Ovary (tissue), 10 donors: ENCODE measurements at regions of chr14 and their contacts with region 1.

Region 1: GRCh38 chr14:95534299-95535225 is at the start of gene GLRX5:
- DNase-seq: peak; percentile 97 to 99 (median 98)
- H3K4me3 ChIP-seq: peak within 1 kb of the TSS; percentile 85
- H3K27ac ChIP-seq: peak within 1 kb of the TSS; percentile 64 to 71
- H3K4me1 ChIP-seq: peaks cover 23% of the 10 kb centered on the region
- H3K27me3 ChIP-seq: no peaks in the 10 kb centered on the region
- CTCF ChIP-seq: no peak
- EP300 ChIP-seq: no peak
- POLR2A ChIP-seq: peak; percentile 57
- total RNA-seq, gene GLRX5: 38.0 to 49.2 (median 41.7) TPM

Region 2: DNA sequence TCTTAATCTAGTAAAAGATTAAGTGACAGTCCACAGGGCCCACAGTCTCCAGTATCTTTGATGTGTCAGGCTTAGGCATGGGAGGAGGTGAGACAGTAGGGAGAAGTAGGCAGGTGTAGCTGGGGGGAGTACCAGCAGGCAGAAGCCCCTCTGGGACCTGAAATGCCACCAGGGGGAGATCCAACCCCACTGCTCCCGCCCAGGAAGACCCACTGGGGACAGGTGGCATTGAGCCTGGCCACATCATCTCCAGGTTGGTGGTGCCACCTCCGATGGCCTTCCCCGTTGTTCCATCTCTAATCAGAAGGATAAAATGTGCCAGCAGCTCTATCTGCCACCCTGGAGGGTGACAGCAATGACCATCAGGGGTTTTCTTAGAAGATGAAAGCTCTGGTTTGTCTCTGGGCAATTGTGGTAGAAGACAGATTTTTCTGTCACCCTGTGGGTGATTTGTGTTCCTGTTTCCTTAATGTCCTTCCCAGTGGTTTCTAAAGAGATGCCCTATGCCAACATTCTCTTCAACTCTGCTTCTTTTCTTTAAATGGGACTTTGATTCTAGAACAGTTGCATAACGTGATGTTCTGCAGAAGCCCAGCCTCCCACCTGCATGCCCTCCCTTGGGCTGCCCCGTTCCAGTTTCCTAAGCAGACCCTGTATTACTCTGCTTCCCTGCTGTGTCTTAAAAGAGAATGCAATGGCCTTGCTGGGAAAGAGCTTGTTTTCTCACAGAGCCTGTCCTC is 1013.0 kb before region 1 on chr14:
- intact Hi-C with region 1: loop called in 1 of 4 experiments (anchors 5 kb)
- DNase-seq: no peak
- H3K4me3 ChIP-seq: no peak overlapping the region
- H3K27ac ChIP-seq: no peak overlapping the region
- H3K4me1 ChIP-seq: no peaks in the 10 kb centered on the region
- H3K27me3 ChIP-seq: no peaks in the 10 kb centered on the region
- CTCF ChIP-seq: no peak
- EP300 ChIP-seq: no peak
- POLR2A ChIP-seq: no peak

Region 3: DNA sequence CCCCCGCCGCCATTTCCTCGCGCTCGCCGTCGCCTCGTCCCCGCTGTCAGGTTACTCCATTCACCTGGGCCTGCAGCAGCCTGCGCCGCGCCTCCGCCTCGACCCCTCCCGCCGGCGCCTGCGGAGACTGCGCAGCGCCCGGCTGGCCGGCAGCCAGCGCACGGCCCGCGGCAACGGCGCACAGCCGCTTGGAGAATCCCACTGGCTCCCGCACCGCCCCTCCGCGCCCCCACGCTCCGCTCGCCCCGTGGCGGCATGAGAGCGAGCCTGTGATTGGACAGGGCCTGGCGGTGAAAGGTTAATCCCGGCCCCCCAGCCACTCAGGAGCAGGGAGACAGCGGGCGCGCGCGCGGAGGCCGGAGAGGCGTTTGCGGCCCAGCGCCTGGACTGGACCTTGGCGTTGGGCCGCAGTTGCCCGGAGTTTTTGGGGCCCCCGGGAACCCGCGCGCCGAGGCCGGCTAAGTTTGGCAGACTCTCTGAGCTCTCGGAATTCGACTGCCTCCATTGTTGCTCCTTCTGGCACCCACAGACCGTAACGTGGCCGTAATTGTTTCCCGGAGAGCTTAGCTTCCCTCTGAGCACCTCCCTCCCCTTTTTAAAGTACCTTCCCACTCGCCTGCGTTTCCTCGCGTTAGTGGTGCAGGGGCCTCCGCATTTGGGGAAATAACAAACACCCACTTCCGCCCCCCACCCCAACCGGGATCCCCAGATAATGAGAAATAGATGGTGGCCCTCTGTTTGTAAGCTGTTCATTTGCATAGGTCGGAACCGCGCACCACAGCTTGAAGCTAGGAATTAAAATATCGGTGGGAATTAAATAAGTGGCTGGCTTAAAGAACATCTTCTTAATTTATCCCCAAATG is 377.0 kb before region 1 on chr14 and contains the start of gene DICER1:
- intact Hi-C with region 1: loop called in 1 of 4 experiments (anchors 5 kb)
- DNase-seq: peak; percentile 98 to 100 (median 99)
- H3K4me3 ChIP-seq: peak within 1 kb of the TSS; percentile 91
- H3K27ac ChIP-seq: peak within 1 kb of the TSS; percentile 91 to 93
- H3K4me1 ChIP-seq: peaks cover 16% of the 10 kb centered on the region
- H3K27me3 ChIP-seq: no peaks in the 10 kb centered on the region
- CTCF ChIP-seq: peak in 1 of 3 donors; percentile 14
- EP300 ChIP-seq: peak; percentile 3
- POLR2A ChIP-seq: peak; percentile 61
- total RNA-seq, gene DICER1: 37.1 to 54.7 (median 50.1) TPM

Region 4: DNA sequence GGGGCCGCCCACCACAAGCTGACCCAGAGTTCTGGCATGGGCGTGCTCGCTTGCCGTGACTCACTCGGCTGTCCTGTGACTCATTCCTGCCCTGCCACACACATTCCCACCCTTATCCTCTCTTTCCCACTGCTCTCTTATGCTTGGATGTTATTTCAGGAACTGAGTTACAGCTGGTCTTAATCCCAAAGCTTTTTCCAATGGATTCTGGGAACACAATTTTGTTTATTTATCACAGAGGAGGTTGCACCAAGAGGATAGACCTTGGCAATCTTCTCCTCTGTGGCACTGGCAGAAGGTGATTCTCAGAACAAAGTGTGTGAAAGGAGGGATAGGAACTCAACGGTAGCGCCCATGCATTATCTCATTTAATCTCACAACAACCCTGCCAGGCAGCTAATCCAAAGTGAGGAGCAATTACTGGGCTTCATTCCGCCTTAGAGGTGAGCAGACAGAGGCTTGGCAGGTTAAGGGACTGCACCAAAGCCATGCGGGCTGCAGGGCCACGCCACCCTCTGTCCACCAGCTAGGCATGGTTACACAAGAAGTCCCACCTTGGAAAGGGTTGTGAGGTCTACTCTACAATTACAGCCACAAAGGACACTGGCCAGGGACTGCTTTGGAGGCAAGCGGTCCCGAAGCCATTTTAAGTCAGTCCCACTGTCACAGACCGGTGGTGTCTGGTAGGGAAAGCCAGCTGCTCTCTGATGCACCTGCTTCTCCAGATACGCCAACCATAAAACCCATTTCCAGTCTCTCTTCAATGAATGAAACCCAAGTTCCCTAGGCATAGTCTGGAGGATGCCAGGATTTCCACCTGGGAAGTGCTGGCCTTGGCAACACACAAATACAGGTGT is 51.0 kb before region 1 on chr14:
- intact Hi-C with region 1: loop called in 2 of 4 experiments (anchors 5 to 10 kb)
- DNase-seq: peak; percentile 79 to 89 (median 85)
- H3K4me3 ChIP-seq: no peak overlapping the region
- H3K27ac ChIP-seq: peak overlapping the region; percentile 44 to 71
- H3K4me1 ChIP-seq: peaks cover 18% of the 10 kb centered on the region
- H3K27me3 ChIP-seq: no peaks in the 10 kb centered on the region
- CTCF ChIP-seq: no peak
- EP300 ChIP-seq: no peak
- POLR2A ChIP-seq: no peak